Endothelial cell of umbilical vein (primary cell): ENCODE measurements at regions of chr14 and their contacts with region 1.

Region 1: DNA sequence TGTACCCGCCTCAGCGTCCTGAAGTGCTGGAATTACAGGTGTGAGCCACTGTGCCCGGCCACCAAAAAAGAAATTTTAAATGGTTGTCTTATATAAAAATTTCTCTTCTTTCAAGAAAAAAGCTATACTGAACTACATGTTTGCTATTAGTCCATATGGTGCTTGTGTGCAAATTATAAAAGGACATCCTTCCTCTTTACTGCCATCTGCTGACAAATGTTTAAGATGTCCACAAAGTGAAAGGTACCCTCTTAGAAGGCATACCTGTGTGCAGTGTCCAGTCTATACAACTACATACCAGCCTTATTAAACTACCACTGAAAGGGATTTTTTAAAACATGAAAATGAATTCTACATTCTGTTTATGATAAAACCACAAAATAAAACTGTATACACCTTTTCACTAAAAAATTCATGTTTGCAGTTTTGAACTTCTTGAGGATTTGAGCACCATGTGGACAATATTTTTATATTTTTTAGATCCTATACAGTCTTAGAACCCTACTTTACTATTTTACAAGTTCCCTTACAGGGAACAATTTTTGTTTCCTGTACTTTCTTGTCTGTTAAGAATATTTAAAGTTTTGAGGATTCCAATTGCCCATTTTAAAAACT is 32.8 kb upstream of the TOMM20L start:
- DNase-seq: peak; percentile 28
- H3K4me3 ChIP-seq: no peak overlapping the region
- H3K27ac ChIP-seq: no peak overlapping the region
- H3K4me1 ChIP-seq: no peaks in the 10 kb centered on the region
- H3K27me3 ChIP-seq: no peaks in the 10 kb centered on the region
- CTCF ChIP-seq: peak in 1 of 2 donors; percentile 20
- POLR2A ChIP-seq: no peak

Region 2: GRCh38 chr14:58331111-58331510 is 31.8 kb before region 1 on chr14:
- CTCF ChIA-PET with region 1: no interaction called
- POLR2A ChIA-PET with region 1: no interaction called
- dilution Hi-C with region 1: no loop called
- intact Hi-C with region 1: no loop called
- DNase-seq: peak; percentile 98
- H3K4me3 ChIP-seq: peak overlapping the region in 1 of 3 experiments; percentile 26
- H3K27ac ChIP-seq: peak overlapping the region; percentile 22
- H3K4me1 ChIP-seq: peaks cover 10% of the 10 kb centered on the region
- H3K27me3 ChIP-seq: no peaks in the 10 kb centered on the region
- CTCF ChIP-seq: no peak
- POLR2A ChIP-seq: no peak

Region 3: DNA sequence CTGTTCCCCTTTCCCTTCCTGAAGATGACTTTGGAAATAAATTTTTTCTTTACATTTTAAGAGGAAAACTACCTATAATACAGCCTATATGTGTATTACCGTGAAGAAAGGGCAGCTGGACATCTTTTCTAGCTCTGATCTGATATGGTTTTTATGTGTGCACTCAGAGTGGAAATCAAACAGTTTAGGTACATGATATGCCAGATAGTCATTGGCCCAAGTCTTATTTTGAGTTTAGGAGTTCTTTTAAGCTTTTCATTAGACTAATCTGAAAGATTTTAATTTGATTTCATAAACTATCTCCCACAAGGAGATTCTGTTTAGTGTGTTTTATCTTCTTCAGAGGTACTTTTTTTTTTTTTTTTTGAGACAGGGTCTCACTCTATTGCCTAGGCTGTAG is 113.4 kb after region 1 on chr14:
- CTCF ChIA-PET with region 1: no interaction called
- POLR2A ChIA-PET with region 1: interaction called, 10 read pairs
- dilution Hi-C with region 1: no loop called
- intact Hi-C with region 1: no loop called
- DNase-seq: no peak
- H3K4me3 ChIP-seq: no peak overlapping the region
- H3K27ac ChIP-seq: no peak overlapping the region
- H3K4me1 ChIP-seq: no peaks in the 10 kb centered on the region
- H3K27me3 ChIP-seq: no peaks in the 10 kb centered on the region
- CTCF ChIP-seq: no peak
- POLR2A ChIP-seq: no peak